Activated T-helper 1 cell treated with anti-CD3 and anti-CD28 coated beads, Interleukin-12 subunit alpha, Interleukin-12 subunit beta, Interleukin-2, Interleukin-4 antibody, amounts not matched to agents 30 ng/mL and 10 ng/mL and 1 ng/mL, durations not matched to agents 14 hours and 24 hours and 36 hours (primary cell): ENCODE measurements at regions of chr12 and their contacts with region 1.

Region 1: GRCh38 chr12:128823916-128824839 is at the start of gene SLC15A4:
- DNase-seq: peak; percentile 94
- H3K4me3 Mint-ChIP-seq: peak within 1 kb of the TSS; percentile 87
- H3K27ac Mint-ChIP-seq: peak within 1 kb of the TSS; percentile 81
- H3K4me1 Mint-ChIP-seq: peaks cover 43% of the 10 kb centered on the region
- H3K27me3 Mint-ChIP-seq: no peaks in the 10 kb centered on the region
- total RNA-seq, gene SLC15A4: 33.0 and 33.7 TPM in 2 replicates

Region 2: DNA sequence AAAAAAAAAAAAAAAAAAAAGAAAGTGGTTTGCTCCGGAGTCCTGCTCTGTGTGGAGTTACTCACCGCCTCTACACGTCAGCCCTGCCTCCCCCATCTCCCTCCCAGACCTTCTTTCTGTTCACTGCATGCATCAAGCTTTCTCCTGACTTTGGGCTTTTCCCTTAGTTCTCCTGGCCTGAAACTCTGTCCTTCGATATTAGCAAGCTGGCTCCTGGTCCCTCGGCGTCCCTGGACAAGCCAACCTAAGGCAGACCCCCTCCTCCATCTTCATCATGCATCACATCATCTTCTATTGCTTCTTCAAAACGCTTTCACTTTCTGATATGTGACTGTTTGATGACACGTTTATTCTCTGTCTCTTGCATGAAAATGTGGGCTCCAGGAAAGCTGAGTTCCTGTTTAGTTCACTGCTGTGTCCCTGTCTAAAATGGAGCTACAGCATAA is 41.0 kb before region 1 on chr12:
- intact Hi-C with region 1: loop called (anchors 5 kb)
- DNase-seq: no peak
- H3K4me3 Mint-ChIP-seq: peak overlapping the region; percentile 50
- H3K27ac Mint-ChIP-seq: peak overlapping the region; percentile 86
- H3K4me1 Mint-ChIP-seq: peaks cover 12% of the 10 kb centered on the region
- H3K27me3 Mint-ChIP-seq: peaks cover 3% of the 10 kb centered on the region

Region 3: DNA sequence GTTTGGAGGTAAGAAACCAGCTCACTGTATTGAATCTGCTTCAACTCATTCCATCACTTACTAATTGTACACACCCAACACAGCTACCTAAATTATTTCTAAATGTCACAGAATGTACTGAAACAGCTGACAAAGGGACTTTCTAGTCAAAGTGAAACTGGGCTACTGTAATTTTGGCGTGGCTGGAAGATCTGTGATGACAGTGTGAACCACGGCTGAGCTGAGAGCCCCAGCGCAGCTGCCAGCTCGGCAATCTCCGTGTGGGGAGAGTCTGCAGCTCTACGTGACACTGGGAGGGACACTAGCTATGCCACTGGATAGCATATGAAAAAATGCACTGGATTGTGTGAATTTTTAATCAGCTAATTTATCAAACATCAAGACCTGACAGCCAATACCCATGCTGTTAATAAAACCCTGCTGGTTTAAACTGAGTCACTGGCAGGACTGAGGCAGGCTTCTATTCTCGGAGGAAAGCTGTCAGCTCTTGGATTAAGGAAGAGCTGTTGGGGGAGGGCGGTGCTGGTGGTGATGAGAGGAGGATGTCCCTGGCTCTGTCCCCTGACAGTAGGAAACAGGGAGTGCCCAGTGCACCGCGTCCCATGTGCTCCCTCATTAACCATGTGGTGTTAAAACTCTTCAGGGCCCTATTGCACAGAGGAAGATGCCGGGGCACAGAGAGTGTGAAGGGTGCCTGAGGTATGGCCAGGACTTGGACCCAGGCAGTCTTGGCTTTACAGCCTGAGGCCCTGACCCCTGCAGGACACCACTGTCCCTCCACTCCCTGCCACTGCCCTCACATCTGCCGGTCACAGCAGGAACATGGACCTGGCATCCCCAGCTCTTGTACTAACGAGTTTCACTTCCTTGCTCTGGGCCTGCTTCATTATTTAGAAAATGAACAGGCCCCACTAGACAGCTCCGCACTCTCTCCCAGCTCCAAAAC is 13.7 kb before region 1 on chr12:
- intact Hi-C with region 1: loop called (anchors 1 kb)
- DNase-seq: peak; percentile 48
- H3K4me3 Mint-ChIP-seq: peak overlapping the region; percentile 45
- H3K27ac Mint-ChIP-seq: peak overlapping the region; percentile 90
- H3K4me1 Mint-ChIP-seq: peaks cover 46% of the 10 kb centered on the region
- H3K27me3 Mint-ChIP-seq: no peaks in the 10 kb centered on the region

Region 4: DNA sequence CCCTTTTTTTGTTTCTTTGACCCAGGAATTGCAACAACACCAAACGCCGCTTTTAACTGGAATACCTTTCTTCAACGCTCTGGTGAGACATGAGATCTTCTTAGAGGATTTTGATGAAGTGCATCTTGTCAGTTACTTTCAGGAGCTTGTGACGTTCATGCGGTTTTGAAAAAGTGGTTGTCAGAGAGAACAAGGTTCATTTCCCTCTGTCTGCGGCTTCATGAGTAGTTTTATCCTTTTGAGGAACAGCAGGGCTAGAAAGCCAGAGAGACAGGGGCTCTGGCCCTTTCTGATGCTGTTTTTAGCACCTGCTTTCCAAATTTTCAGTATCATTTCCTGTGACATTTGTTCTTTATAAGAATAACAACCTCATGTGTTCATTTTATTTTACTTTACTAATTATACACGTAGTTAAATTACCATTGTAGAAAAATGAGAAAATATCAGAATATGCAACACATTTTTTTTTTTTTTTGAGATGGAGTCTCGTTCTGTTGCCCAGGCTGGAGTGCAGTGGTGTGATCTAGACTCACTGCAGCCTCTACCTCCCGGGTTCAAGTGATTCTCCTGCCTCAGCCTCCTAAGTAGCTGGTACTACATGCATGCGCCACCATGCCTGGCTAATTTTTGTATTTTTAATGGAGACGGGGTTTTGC is 90.9 kb after region 1 on chr12:
- intact Hi-C with region 1: loop called (anchors 1 kb)
- DNase-seq: peak; percentile 55
- H3K4me3 Mint-ChIP-seq: peak overlapping the region; percentile 30
- H3K27ac Mint-ChIP-seq: peak overlapping the region; percentile 68
- H3K4me1 Mint-ChIP-seq: peaks cover 46% of the 10 kb centered on the region
- H3K27me3 Mint-ChIP-seq: peaks cover 6% of the 10 kb centered on the region